Aorta (tissue), 5 donors: ENCODE measurements at regions of chr5 and their contacts with region 1.

Region 1: DNA sequence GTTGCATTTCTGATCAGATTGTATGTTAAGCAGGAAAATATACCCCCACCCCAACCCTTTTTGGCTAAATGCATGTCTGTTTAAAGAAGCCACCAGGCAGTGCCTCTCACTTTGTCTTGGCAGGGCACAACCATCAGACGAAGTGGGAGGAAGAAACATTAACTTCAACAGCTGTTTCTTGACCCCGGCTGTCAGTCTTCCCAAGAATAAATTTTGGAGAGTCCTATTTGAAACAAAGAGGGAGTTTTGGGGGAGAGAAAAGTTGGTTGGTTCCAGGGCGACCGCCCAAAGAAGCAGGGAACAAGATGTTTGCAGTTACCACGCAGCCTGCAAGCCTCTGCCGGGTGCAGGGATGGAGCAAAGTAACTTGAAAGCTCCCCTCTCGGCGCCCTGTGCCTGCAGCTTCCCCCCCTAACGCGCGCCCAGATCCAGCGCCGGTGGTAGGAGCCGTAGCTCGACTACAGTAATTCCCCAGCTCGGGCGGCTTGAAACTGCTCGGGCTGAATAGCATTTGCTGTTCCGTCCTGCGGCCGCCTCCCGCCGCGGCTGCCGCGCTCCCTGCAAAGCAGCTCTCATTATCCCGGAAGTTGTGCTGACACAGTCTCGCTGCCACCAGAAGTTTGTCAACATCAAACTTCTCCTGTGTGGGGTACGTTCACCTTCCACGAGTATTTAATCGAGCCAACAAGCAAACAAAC is 100.7 kb upstream of the SSBP2 start:
- DNase-seq: peak; percentile 98
- ATAC-seq: peak; percentile 98
- H3K4me3 ChIP-seq: peak overlapping the region; percentile 47 to 81
- H3K27ac ChIP-seq: peak overlapping the region; percentile 73 to 94
- H3K4me1 ChIP-seq: peaks cover 5 to 12% of the 10 kb centered on the region in 2 donors
- H3K27me3 ChIP-seq: no peaks in the 10 kb centered on the region

Region 2: DNA sequence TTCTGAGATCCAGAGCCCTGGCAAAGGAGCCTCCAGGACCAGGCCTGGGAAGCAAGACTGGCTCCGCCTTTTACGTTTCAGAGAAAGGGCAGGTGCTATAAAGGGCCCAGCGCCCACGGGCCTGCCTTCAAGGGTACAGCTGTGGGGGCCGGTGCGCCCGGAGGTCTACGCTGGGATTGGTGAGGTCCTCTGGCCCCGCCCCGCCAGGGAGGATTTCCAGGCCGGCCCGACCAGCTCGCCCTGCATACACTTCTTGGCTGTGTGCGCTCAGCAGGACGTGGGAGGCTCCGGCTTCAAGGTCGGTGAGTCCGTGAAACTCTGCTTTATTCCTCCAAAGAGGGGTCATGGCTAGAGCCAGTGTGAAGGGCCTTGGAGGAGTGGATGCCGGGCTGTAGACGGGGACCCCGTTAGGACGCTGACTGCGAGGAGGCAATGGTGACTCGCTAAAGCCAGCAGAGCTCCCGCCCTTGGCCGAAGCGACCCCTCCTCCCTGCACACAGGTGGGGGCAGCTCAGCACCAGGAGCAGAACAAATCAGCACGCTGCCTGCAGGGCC is 618.5 kb before region 1 on chr5 and contains the start of gene CKMT2:
- intact Hi-C with region 1: loop called in 1 of 2 experiments (anchors 10 kb)
- DNase-seq: peak; percentile 90 to 94
- ATAC-seq: peak; percentile 90
- H3K4me3 ChIP-seq: peak within 1 kb of the TSS; percentile 5 to 29
- H3K27ac ChIP-seq: peak within 1 kb of the TSS; percentile 73 to 92
- H3K4me1 ChIP-seq: no peaks in the 10 kb centered on the region
- H3K27me3 ChIP-seq: no peaks in the 10 kb centered on the region
- total RNA-seq, gene CKMT2: 24.1 to 29.3 TPM

Region 3: GRCh38 chr5:81425569-81425968 is 426.1 kb before region 1 on chr5:
- intact Hi-C with region 1: loop called in 1 of 2 experiments (anchors 5 kb)
- DNase-seq: no peak
- ATAC-seq: peak; percentile 69
- H3K4me3 ChIP-seq: no peak overlapping the region
- H3K27ac ChIP-seq: no peak overlapping the region
- H3K4me1 ChIP-seq: peaks cover 0 to 2% of the 10 kb centered on the region in 2 donors
- H3K27me3 ChIP-seq: no peaks in the 10 kb centered on the region

Region 4: GRCh38 chr5:81506900-81507588 is 344.6 kb before region 1 on chr5:
- intact Hi-C with region 1: loop called (anchors 2 to 5 kb)
- DNase-seq: peak in 1 of 2 donors; percentile 54
- ATAC-seq: peak; percentile 98
- H3K4me3 ChIP-seq: no peak overlapping the region
- H3K27ac ChIP-seq: no peak overlapping the region
- H3K4me1 ChIP-seq: no peaks in the 10 kb centered on the region
- H3K27me3 ChIP-seq: no peaks in the 10 kb centered on the region

Region 5: GRCh38 chr5:81590498-81591384 is 260.9 kb before region 1 on chr5:
- intact Hi-C with region 1: no loop called
- DNase-seq: no peak
- ATAC-seq: no peak
- H3K4me3 ChIP-seq: no peak overlapping the region
- H3K27ac ChIP-seq: no peak overlapping the region
- H3K4me1 ChIP-seq: no peaks in the 10 kb centered on the region
- H3K27me3 ChIP-seq: no peaks in the 10 kb centered on the region

Region 6: DNA sequence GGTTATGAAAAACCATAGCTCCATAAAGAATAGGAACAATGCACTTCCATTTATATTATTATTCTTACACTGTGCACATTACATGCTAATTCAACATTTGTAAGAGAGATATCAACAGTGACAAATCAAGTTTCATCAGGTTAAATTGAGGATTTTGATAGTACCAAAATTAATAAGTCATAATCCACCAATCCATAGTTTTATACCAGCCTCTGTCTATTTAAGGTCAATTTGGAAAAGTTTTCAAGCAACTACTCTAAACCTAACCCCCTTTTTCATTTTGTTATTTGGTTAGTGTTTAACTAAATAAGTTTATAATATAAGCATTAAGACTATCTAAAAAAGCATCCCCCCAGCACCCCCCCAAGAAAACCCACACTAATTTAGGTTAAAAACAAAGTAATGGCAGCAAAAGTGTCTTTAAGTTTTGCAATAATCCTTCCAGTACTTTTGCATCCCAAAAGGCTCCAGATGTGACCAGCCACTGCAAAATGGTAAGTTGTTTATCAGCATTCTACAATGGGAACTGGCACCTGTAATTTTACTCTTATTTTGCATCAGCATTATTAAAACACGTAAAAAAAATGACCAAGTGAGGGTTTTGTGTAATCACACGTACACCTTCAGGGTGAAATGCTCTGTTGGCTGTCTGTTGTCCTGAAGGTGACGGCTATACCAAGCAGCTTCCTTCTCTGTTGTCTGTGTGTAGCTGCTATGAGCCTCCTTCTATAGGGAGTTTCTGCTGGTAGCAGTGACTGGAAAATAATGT is 64.0 kb before region 1 on chr5:
- intact Hi-C with region 1: loop called (anchors 1 kb)
- DNase-seq: peak in 1 of 2 donors; percentile 71
- ATAC-seq: peak; percentile 86
- H3K4me3 ChIP-seq: no peak overlapping the region
- H3K27ac ChIP-seq: no peak overlapping the region
- H3K4me1 ChIP-seq: peaks cover 4 to 6% of the 10 kb centered on the region in 2 donors
- H3K27me3 ChIP-seq: no peaks in the 10 kb centered on the region

Region 7: GRCh38 chr5:81971712-81972495 is 120.3 kb after region 1 on chr5 and contains the start of gene ATG10:
- intact Hi-C with region 1: loop called (anchors 2 to 5 kb)
- DNase-seq: peak; percentile 95 to 97
- ATAC-seq: peak; percentile 100
- H3K4me3 ChIP-seq: peak within 1 kb of the TSS; percentile 96 to 97
- H3K27ac ChIP-seq: peak within 1 kb of the TSS; percentile 65 to 95
- H3K4me1 ChIP-seq: no peaks in the 10 kb centered on the region
- H3K27me3 ChIP-seq: no peaks in the 10 kb centered on the region
- total RNA-seq, gene ATG10: 7.1 to 10.3 TPM

Region 8: GRCh38 chr5:82165740-82166530 is 314.3 kb after region 1 on chr5:
- intact Hi-C with region 1: loop called (anchors 5 to 10 kb)
- DNase-seq: peak; percentile 74 to 77
- ATAC-seq: peak; percentile 97
- H3K4me3 ChIP-seq: no peak overlapping the region
- H3K27ac ChIP-seq: no peak overlapping the region
- H3K4me1 ChIP-seq: no peaks in the 10 kb centered on the region
- H3K27me3 ChIP-seq: no peaks in the 10 kb centered on the region